PC-3 (cell line): ENCODE measurements at regions of chr3 and their contacts with region 1.

Region 1: GRCh38 chr3:8987645-8988383 is 24.5 kb upstream of the RAD18 start:
- DNase-seq: peak; percentile 75
- ATAC-seq: peak; percentile 89
- H3K4me3 ChIP-seq: no peak overlapping the region
- H3K27ac ChIP-seq: no peak overlapping the region
- H3K4me1 ChIP-seq: no peaks in the 10 kb centered on the region
- H3K27me3 ChIP-seq: no peaks in the 10 kb centered on the region
- CTCF ChIP-seq: peak; percentile 95

Region 2: GRCh38 chr3:9013782-9014563 is 26.2 kb after region 1 on chr3:
- CTCF ChIA-PET with region 1: interaction called, 14 read pairs
- POLR2A ChIA-PET with region 1: no interaction called
- intact Hi-C with region 1: no loop called
- DNase-seq: peak; percentile 12
- ATAC-seq: peak; percentile 68
- H3K4me3 ChIP-seq: no peak overlapping the region
- H3K27ac ChIP-seq: no peak overlapping the region
- H3K4me1 ChIP-seq: 0 out of 2 replicates have a peak, but pooled peaks cover 5% of the 10 kb centered on the region
- H3K27me3 ChIP-seq: no peaks in the 10 kb centered on the region
- CTCF ChIP-seq: peak; percentile 39; the same call in 1 of the 2 replicates

Region 3: GRCh38 chr3:9439331-9439730 is 451.5 kb after region 1 on chr3:
- CTCF ChIA-PET with region 1: no interaction called
- POLR2A ChIA-PET with region 1: no interaction called
- intact Hi-C with region 1: no loop called
- DNase-seq: no peak
- ATAC-seq: 0 out of 2 replicates have a peak, but pooled peaks have one; percentile 20
- H3K4me3 ChIP-seq: no peak overlapping the region
- H3K27ac ChIP-seq: no peak overlapping the region
- H3K4me1 ChIP-seq: no peaks in the 10 kb centered on the region
- H3K27me3 ChIP-seq: no peaks in the 10 kb centered on the region
- CTCF ChIP-seq: no peak